SK-N-SH (cell line): ENCODE measurements at regions of chr16 and their contacts with region 1.

Region 1: GRCh38 chr16:66483689-66484481 is 56.8 kb downstream of the BEAN1 start:
- DNase-seq: peak; percentile 90
- H3K4me3 ChIP-seq: peak overlapping the region in 1 of 2 experiments; percentile 41; a peak in 1 of 4 replicates
- H3K27ac ChIP-seq: no peak overlapping the region
- H3K4me1 ChIP-seq: peaks cover 10% of the 10 kb centered on the region in 2 experiments; a peak in 2 of 4 replicates
- H3K27me3 ChIP-seq: no peaks in the 10 kb centered on the region
- CTCF ChIP-seq: peak; percentile 95
- EP300 ChIP-seq: no peak
- RAD21 ChIP-seq: peak; percentile 93

Region 2: GRCh38 chr16:66469291-66469946 is 14.5 kb before region 1 on chr16:
- CTCF ChIA-PET with region 1: interaction called, 16 read pairs
- POLR2A ChIA-PET with region 1: no interaction called
- DNase-seq: no peak
- H3K4me3 ChIP-seq: no peak overlapping the region
- H3K27ac ChIP-seq: no peak overlapping the region
- H3K4me1 ChIP-seq: no peaks in the 10 kb centered on the region
- H3K27me3 ChIP-seq: no peaks in the 10 kb centered on the region; the same call in 1 of the 2 replicates
- CTCF ChIP-seq: no peak
- EP300 ChIP-seq: no peak
- RAD21 ChIP-seq: no peak